Activated CD4-positive, alpha-beta T cell treated with anti-CD3 and anti-CD28 coated beads, Interleukin-2, amount 10 ng/mL, durations not matched to agents 7 days and 5 days (primary cell): ENCODE measurements at regions of chr12 and their contacts with region 1.

Region 1: GRCh38 chr12:3885277-3886094 is 12.3 kb upstream of the PARP11 start:
- DNase-seq: peak; percentile 68
- H3K4me3 Mint-ChIP-seq: no peak overlapping the region
- H3K27ac Mint-ChIP-seq: peak overlapping the region; percentile 14
- H3K4me1 Mint-ChIP-seq: peaks cover 23% of the 10 kb centered on the region
- H3K27me3 Mint-ChIP-seq: peaks cover 7% of the 10 kb centered on the region

Region 2: GRCh38 chr12:3872800-3873636 is 12.5 kb before region 1 on chr12 and contains the start of gene PARP11:
- CTCF ChIA-PET with region 1: interaction called, 15 read pairs
- POLR2A ChIA-PET with region 1: no interaction called
- DNase-seq: peak; percentile 99
- H3K4me3 Mint-ChIP-seq: peak within 1 kb of the TSS; percentile 98
- H3K27ac Mint-ChIP-seq: peak within 1 kb of the TSS; percentile 99
- H3K4me1 Mint-ChIP-seq: peaks cover 48% of the 10 kb centered on the region
- H3K27me3 Mint-ChIP-seq: no peaks in the 10 kb centered on the region
- total RNA-seq, gene PARP11: 49.1 to 53.6 TPM

Region 3: GRCh38 chr12:3896801-3897331 is 11.4 kb after region 1 on chr12:
- CTCF ChIA-PET with region 1: interaction called, 14 read pairs
- POLR2A ChIA-PET with region 1: no interaction called
- DNase-seq: peak; percentile 10
- H3K4me3 Mint-ChIP-seq: peak overlapping the region; percentile 59
- H3K27ac Mint-ChIP-seq: peak overlapping the region; percentile 94
- H3K4me1 Mint-ChIP-seq: peaks cover 39% of the 10 kb centered on the region
- H3K27me3 Mint-ChIP-seq: no peaks in the 10 kb centered on the region

Region 4: DNA sequence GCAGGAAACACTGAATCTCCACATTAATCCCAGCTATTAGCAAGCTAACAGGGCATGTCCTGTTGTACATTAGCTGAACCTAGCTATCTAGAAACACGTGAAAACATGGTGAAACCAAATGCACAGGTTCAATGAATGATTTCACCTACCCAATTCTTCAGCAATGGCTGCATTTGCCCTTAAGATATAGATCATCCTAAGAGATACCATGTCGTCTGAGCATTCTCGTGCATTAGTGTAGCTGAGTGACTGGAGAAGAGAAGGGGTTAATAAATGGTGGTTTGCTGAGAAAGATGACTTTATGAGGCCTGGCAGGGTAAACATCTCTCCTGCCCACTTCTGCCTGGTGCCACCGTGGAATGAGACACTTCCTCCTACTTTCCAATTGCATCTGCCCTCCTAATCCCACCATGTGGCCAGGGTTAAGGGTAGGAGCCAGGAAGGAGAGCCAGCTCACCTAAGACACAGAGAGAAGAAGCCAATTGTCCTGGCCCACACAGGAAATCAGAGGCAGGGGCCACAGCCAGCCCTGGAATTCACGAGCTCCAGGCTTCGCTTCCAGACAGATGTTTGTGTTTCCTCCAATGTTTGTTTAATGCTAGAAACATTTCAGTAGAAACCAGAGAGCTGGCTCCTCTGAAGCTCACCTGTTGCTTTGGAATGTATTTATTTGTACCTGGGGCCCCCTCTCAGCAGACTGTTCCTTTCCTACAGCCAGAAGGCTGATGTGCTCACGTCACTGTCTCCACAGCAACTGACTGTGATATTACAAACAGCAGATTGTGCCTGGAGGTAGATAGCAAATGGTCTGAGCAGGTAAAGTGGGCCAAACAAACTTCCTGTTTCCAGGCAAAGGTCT is 113.7 kb after region 1 on chr12:
- CTCF ChIA-PET with region 1: interaction called, 11 read pairs
- POLR2A ChIA-PET with region 1: no interaction called
- DNase-seq: no peak
- H3K4me3 Mint-ChIP-seq: no peak overlapping the region
- H3K27ac Mint-ChIP-seq: no peak overlapping the region
- H3K4me1 Mint-ChIP-seq: peaks cover 13% of the 10 kb centered on the region
- H3K27me3 Mint-ChIP-seq: no peaks in the 10 kb centered on the region